ENCODE measurements at regions of chr7 and their contacts with region 1.

Region 1: GRCh38 chr7:105759670-105760550 is 116.5 kb downstream of the ATXN7L1 start:
- DNase-seq: no peak
- ATAC-seq: peak; percentile 48

Region 2: DNA sequence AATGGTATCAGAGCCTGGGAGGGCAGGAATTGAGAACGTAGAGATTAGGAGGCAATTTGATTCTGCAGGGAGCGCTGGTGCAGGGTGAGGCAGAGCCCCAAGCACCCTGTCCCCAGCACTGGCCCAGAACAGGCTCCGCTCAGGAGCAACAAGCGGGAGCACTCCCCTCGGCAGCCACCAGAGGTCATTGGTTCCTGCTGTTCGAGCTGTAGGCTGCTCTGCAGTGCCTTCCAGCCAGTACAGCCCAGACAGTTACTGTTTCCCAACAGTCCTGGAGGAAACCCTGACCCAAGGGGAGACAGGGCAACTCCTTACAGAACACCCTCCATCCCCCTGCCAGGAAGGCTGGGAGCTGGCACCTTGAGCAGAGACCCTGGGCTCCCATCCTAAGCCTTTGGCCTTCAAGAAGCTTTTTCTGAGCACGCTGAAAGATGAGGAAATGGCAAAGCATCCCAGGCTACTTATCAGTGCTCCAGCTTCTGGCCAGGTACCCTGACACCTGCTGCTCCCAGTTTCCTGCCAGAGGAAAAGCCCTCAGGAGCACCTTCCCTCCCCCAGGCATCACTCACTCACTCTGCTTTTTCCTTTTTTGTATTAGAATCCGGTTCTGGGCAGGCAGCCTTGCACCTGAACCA is 107.4 kb before region 1 on chr7:
- intact Hi-C with region 1: loop called (anchors 10 kb)
- DNase-seq: peak; percentile 84
- ATAC-seq: peak; percentile 90

Region 3: DNA sequence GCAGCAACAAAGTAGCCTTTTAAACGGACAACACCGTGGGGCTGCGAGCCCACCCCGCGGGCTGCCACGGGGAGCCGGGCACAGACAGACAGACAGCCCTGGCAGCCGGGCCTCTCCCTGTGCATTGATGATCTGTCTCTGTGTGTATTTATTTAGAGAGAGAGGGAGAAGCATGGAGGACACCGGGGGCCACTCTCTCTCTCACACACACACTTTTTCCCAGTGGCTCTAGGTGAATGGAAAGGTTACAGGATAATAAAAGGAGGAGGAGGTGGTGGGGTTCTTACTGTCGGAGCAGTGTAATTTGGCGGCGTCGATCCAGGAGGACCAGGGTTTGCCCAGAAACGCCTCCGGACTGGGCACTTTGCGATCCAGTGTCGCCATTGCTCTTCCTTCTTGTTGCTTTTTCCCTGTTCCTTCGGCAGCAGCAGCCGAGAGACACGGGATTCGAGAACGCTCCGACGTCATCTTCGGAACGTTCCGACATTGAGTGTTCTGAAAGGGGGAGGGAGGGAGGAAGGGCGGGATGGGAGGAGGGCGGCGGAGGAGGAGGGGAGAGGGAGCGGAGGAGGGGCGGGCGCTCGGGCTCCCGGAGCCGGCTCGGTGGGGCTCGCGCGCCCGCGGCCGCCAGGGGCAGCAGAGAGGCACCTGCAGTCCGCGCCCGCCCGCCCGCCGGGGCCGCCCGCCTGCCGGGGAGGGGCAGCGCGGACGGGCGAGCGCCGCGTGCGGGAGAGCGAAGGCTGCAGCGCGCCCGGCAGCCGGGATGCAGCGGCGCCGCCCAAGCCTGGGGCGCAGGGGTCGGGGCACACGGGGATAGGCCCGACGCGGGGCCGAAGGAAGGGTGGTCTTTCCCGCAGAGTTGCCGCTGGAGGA is 116.4 kb after region 1 on chr7 and contains the start of gene ATXN7L1:
- intact Hi-C with region 1: loop called (anchors 5 kb)
- DNase-seq: peak; percentile 94
- ATAC-seq: peak; percentile 98
- total RNA-seq, gene ATXN7L1: 6.7 TPM

Region 4: GRCh38 chr7:106009403-106010226 is 249.7 kb after region 1 on chr7:
- intact Hi-C with region 1: loop called (anchors 2 kb)
- DNase-seq: peak; percentile 90
- ATAC-seq: peak; percentile 93

Region 5: DNA sequence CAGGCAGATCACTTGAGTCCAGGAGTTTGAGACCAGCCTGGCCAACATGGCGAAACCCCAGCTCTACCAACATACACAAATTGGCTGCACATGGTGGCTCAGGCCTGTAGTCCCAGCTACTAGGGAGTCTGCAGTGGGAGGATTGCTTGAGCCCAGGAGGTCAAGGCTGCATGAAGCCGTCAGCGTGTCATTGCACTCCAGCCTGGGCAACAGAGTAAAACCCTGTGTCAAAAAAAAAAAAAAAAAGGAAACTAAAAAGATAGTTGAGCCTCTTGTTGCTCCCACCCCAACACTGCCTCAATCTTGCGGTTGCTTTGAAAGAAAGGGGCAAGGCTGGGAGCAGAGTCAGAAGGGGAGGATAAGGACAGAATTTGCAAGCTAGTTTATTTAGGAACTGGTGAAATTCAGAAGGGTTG is 282.3 kb after region 1 on chr7:
- intact Hi-C with region 1: loop called (anchors 1 kb)
- DNase-seq: no peak
- ATAC-seq: no peak

Region 6: DNA sequence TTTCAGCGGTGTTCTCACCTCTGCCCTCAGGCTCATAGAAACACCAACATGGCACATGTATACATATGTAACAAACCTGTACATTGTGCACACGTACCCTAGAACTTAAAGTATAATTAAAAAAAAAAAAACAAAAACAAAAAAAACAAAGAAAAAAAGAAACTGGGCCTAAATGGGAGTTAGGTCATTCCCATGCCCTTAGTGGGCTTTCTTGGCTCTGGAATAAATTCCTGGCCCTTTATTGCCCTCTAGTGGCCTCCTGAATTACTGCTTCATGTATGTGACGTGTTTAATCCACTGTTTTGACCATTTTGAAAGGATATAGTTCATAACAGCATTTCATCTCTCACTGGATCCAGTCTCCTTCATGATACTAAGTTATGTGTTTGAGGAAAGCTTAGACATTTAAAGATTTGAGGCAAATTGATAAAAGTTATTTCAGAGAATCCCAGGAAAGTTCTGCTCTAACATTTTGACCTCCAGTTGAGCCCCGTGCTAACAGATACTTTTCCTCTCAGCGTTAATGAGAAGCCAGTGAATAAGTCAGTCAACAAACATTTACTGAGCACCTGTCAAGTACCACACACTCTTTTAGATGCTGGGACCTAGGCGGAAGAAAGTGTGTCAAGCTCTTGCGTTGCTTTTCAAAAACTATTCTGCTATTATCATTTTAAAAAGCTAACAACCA is 406.9 kb after region 1 on chr7:
- intact Hi-C with region 1: loop called (anchors 10 kb)
- DNase-seq: no peak
- ATAC-seq: peak; percentile 62

Measured in Right ventricle myocardium inferior (tissue), 1 donor.